Activated T-helper 2 cell treated with anti-CD3 and anti-CD28 coated beads, Interferon-gamma antibody, Interleukin-2, Interleukin-4, amounts not matched to agents 10 μg/mL and 5 μg/mL and 100 μg/mL, durations not matched to agents 14 hours and 24 hours and 36 hours (primary cell): ENCODE measurements at regions of chr1 and their contacts with region 1.

Region 1: DNA sequence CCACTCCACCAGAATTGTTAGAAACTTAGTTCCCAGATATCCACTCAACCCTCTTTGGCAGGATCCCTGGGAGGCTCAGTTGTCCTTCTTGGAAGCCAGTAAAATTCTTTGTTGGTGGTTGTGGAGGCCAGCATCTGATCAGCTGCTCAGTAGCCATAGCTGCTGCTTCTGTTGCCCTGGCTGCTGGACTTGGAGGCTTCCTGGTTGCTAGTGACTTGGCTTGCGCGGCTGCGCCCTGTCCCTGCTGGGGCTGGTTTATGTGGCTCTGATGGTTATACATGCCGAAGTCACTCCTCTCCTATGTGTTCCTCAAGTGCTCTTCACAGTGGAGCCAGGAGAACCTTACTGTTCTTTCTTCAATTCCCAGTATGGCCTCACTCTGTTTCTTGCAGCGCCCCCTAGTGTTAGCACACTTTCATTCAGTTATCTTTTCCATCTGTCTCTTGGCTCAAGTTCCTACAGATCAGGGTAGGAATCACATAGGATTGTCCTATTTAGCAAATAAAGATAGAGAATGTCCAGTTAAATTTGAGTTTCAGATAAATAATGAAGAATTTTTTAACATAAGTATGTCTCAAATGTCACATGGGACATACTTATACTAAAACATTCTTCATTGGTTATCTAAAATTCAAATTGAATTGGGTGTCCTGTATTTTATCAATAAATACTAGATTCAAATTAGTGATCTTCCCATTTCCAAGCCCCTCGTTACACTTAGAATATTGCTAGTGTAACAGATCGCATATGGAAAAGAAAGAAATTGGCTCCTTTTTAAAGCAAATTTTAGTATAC is 176.4 kb downstream of the TGFB2 start:
- DNase-seq: no peak
- H3K4me3 Mint-ChIP-seq: no peak overlapping the region
- H3K27ac Mint-ChIP-seq: no peak overlapping the region
- H3K4me1 Mint-ChIP-seq: no peaks in the 10 kb centered on the region
- H3K27me3 Mint-ChIP-seq: peaks cover 15% of the 10 kb centered on the region

Region 2: GRCh38 chr1:218242169-218242568 is 279.4 kb before region 1 on chr1:
- intact Hi-C with region 1: no loop called
- DNase-seq: no peak
- H3K4me3 Mint-ChIP-seq: no peak overlapping the region
- H3K27ac Mint-ChIP-seq: no peak overlapping the region
- H3K4me1 Mint-ChIP-seq: no peaks in the 10 kb centered on the region
- H3K27me3 Mint-ChIP-seq: no peaks in the 10 kb centered on the region

Region 3: DNA sequence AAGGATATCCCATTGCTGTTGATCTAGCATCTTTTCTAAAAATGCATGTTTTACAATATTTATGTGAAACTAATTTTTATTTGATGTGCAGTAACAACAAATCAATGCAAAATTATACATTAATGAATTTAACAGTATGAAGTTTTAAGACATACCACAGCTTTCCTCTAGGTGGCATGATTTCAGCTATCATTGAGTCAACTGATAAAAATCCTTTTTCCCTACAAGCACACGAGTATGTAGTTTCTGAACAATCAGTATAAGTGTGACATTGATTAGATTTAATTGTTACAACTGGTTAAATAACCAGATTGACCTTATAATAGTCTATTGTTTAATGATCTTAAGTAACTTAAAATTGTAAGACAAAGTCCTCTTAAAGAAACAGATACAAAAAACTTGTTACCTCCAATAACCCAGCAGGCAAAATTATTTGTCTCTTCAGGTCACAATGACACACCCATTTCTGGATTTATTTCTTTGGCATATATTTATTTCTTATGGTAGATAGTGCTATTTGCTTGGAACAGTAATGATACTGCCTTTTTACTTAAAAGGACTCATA is 182.2 kb before region 1 on chr1:
- intact Hi-C with region 1: loop called (anchors 1 kb)
- DNase-seq: no peak
- H3K4me3 Mint-ChIP-seq: no peak overlapping the region
- H3K27ac Mint-ChIP-seq: no peak overlapping the region
- H3K4me1 Mint-ChIP-seq: peaks cover 2% of the 10 kb centered on the region
- H3K27me3 Mint-ChIP-seq: peaks cover 23% of the 10 kb centered on the region